ENCODE measurements at regions of chr9 and their contacts with region 1.

Region 1: GRCh38 chr9:75601279-75601678 is 289.2 kb upstream of the PCSK5 start:
- H3K4me3 ChIP-seq: no peak overlapping the region
- H3K27ac ChIP-seq: no peak overlapping the region
- H3K4me1 ChIP-seq: no peaks in the 10 kb centered on the region
- CTCF ChIP-seq: no peak

Region 2: GRCh38 chr9:75588809-75589208 is 12.5 kb before region 1 on chr9:
- CTCF ChIA-PET with region 1: interaction called, 12 read pairs
- POLR2A ChIA-PET with region 1: no interaction called
- H3K4me3 ChIP-seq: no peak overlapping the region
- H3K27ac ChIP-seq: no peak overlapping the region
- H3K4me1 ChIP-seq: no peaks in the 10 kb centered on the region
- CTCF ChIP-seq: no peak

Region 3: DNA sequence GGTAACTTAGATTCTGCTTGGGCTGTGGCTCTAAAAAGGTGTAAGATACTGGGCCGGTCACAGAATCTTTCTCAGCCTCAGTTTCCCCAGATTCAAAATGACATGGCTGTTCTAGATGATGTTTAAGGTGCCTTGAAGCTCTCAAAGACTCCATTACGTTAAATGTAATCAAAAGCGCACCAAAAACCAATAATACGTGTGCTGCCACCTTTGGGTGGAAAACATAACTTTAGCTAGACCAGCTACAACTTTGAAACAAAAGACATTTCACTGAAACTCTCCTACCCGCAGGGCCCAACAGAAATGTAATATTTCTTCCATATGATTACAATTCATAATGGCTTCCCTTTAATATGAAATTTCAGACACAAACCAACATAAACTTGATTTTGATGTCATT is 254.2 kb after region 1 on chr9:
- CTCF ChIA-PET with region 1: interaction called, 12 read pairs
- POLR2A ChIA-PET with region 1: no interaction called
- H3K4me3 ChIP-seq: no peak overlapping the region
- H3K27ac ChIP-seq: no peak overlapping the region
- H3K4me1 ChIP-seq: no peaks in the 10 kb centered on the region
- CTCF ChIP-seq: 0 out of 2 replicates have a peak, but pooled peaks have one; percentile 8

Measured in HEK293 (cell line).